ENCODE measurements at regions of chr4 and their contacts with region 1.

Region 1: DNA sequence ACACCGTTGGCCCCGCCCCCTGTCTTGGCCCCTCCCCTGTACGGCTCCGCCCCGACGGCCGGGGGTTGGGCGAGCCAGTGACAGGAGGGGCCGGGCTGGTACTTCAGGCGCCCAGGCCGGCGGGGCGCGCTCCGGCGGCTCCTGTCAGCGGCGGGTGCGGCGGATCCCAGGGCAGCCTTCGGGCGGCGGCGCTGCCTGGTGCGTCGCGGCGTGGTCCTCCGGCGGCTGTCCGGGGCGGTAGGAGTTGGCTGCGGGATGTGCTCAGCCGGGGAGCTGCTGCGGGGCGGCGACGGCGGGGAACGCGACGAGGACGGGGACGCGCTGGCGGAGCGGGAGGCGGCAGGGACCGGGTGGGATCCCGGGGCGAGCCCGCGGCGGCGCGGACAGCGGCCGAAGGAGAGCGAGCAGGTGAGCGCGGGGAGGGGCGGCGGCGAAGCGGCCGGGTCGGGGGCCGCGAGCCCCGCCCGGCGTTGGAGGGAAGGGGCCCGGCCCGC is at the start of gene FAM241A:
- DNase-seq: peak; percentile 94
- total RNA-seq, gene FAM241A: 6.7 TPM

Region 2: DNA sequence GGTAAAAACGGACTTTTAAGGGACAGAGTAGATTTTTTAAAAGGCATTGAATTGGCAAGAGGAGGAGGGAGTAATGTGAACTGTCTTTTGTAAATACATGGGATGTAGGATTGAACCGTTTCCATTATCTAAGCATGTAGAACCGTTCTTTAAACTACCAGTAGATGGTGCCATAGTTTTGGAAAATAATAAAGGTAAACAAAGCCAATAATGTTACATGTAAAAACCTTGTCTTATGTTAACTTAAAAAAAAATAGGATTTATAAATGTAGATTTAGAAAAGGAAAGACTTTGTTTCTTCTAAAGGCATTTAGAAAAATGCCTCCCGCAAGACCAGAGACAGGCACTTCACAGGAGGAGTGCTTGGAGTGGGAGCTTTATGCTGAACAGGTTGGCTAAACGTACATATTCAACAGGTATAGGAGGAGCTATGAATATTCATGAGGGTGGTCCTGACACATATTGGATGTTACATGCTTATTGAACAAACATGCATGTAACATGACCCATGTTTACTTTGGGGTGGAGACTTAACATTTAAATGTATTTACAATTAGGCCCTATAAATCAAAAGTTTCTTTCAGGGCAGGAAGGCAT is 45.6 kb before region 1 on chr4:
- intact Hi-C with region 1: loop called (anchors 5 kb)
- DNase-seq: no peak